ENCODE measurements at regions of chr19 and their contacts with region 1.

Region 1: DNA sequence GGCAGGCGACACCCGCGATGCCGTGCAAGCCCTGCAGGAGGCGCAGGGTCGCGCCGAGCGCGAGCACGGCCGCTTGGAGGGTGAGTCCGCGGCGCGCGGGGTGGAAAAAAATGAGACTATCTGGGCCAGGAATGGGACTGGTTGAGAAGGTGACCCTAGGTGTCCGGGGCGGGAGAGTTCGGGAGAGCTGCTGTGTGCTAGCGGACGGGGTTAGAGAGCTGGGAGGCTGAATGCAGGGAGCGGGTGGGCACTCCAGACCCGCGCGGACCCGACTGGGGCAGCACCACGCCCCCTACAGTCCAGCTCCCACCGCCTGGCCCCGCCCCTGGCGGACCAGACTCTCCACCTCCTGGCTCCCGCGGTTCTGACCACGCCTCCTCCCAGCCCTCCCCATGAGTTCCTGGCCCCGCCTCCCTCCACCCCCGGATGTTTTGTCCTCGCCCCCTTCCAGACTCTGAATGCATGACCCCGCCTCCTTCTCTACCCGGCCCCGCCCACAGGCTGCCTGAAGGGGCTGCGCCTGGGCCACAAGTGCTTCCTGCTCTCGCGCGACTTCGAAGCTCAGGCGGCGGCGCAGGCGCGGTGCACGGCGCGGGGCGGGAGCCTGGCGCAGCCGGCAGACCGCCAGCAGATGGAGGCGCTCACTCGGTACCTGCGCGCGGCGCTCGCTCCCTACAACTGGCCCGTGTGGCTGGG is 1.5 kb downstream of the CLEC11A start:
- DNase-seq: peak; percentile 99 to 100
- ATAC-seq: peak; percentile 66 to 89
- H3K4me3 ChIP-seq: peak overlapping the region; percentile 73
- H3K27ac ChIP-seq: peak overlapping the region; percentile 86 to 92
- H3K4me1 ChIP-seq: peaks cover 14% of the 10 kb centered on the region
- CTCF ChIP-seq: peak; percentile 95
- EP300 ChIP-seq: no peak
- POLR2A ChIP-seq: peak; percentile 99
- RAD21 ChIP-seq: peak; percentile 47 to 57; a peak in 3 of 5 replicates

Region 2: DNA sequence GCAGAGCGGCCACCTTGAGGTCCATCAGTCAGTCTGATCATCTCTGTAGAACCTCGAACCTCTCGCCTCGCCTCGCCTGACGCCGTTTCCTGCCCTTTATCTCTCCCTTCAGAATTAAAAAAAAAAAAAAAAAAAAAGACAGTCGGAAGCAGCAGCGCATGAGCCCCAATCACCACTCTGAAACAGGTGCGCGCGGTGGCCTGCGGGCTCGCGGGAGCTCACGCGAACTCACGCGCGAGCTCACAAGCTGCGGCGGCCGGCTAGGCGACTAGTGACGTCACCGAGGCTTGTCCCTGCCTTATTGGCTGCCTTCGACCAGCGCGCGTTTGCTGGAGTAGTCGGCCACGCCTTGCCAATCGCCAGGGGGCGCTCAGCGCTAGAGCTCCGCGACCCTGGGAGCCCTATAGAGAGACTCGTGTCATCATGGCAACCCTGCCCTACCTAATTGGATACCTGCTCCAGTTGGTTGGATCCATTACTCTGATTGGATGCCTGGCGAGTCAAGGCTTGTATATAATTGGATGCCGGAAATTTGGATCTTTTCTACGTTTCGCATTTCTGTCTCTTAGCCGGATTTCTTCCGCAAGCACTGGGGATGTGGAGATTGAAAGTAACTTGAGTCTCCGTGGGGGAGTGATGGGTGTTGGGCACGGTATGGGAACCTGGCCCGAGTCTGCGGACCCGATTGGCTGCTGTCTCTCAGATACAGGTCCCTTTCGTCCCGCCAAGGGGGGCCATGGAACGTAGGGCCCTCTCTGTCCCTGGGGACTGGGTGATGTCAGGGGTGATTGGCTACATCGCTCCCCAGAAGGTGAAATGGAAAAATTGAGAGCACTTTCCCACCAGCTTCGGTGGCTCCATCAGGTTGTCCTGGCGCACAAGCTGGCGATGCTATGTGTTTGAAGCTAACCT is 116.5 kb before region 1 on chr19:
- CTCF ChIA-PET with region 1: interaction called, 11 read pairs
- POLR2A ChIA-PET with region 1: interaction called, 10 read pairs
- DNase-seq: peak; percentile 97 to 99
- ATAC-seq: peak; percentile 86 to 90
- H3K4me3 ChIP-seq: peak overlapping the region; percentile 28
- H3K27ac ChIP-seq: peak overlapping the region in 1 of 2 experiments; percentile 37; a peak in 3 of 6 replicates
- H3K4me1 ChIP-seq: peaks cover 5% of the 10 kb centered on the region; the same call in 1 of the 3 replicates
- CTCF ChIP-seq: peak; percentile 82
- EP300 ChIP-seq: no peak
- POLR2A ChIP-seq: no peak
- RAD21 ChIP-seq: peak; percentile 80 to 82

Region 3: GRCh38 chr19:50705422-50706019 is 19.1 kb before region 1 on chr19:
- CTCF ChIA-PET with region 1: interaction called, 119 read pairs
- POLR2A ChIA-PET with region 1: interaction called, 7 read pairs
- DNase-seq: peak; percentile 79 to 95
- ATAC-seq: peak; percentile 84 to 88
- H3K4me3 ChIP-seq: no peak overlapping the region
- H3K27ac ChIP-seq: no peak overlapping the region
- H3K4me1 ChIP-seq: peaks cover 13% of the 10 kb centered on the region; the same call in 1 of the 3 replicates
- CTCF ChIP-seq: peak; percentile 80
- EP300 ChIP-seq: no peak
- POLR2A ChIP-seq: no peak
- RAD21 ChIP-seq: peak; percentile 73 to 76

Region 4: GRCh38 chr19:50741179-50741933 is 16.7 kb after region 1 on chr19:
- CTCF ChIA-PET with region 1: interaction called, 47 read pairs
- POLR2A ChIA-PET with region 1: interaction called, 4 read pairs
- DNase-seq: no peak
- ATAC-seq: peak in 1 of 2 experiments; percentile 30; a peak in 1 of 6 replicates
- H3K4me3 ChIP-seq: no peak overlapping the region
- H3K27ac ChIP-seq: no peak overlapping the region
- H3K4me1 ChIP-seq: no peaks in the 10 kb centered on the region
- CTCF ChIP-seq: no peak
- EP300 ChIP-seq: no peak
- POLR2A ChIP-seq: no peak
- RAD21 ChIP-seq: no peak

Region 5: GRCh38 chr19:50759886-50760285 is 35.2 kb after region 1 on chr19:
- CTCF ChIA-PET with region 1: interaction called, 27 read pairs
- POLR2A ChIA-PET with region 1: interaction called, 5 read pairs
- DNase-seq: peak; percentile 55 to 72
- ATAC-seq: peak in 1 of 2 experiments; percentile 59; a peak in 3 of 6 replicates
- H3K4me3 ChIP-seq: no peak overlapping the region
- H3K27ac ChIP-seq: no peak overlapping the region
- H3K4me1 ChIP-seq: no peaks in the 10 kb centered on the region
- CTCF ChIP-seq: no peak
- EP300 ChIP-seq: no peak
- POLR2A ChIP-seq: no peak
- RAD21 ChIP-seq: no peak

Region 6: DNA sequence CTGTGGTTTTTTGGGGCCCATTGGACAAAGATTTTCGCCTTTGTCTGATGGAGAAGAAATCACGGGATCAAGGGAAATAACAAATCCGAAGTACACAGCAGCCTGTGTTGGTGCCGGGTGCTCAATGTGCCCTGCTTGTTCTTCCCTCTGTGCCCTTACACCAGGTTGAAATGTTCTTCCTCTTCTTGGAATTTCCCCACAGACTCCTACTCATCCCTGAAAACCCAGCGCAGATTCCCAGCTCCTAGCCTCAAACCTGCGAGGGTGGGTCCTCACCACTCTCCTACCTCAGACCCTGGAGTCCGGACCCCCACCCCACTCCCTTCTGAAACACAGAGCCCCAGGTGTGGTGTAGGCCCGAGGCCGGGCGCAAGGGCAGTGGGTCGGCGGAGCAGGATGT is 60.7 kb after region 1 on chr19:
- CTCF ChIA-PET with region 1: interaction called, 272 read pairs
- POLR2A ChIA-PET with region 1: interaction called, 25 read pairs
- DNase-seq: no peak
- ATAC-seq: no peak
- H3K4me3 ChIP-seq: no peak overlapping the region
- H3K27ac ChIP-seq: no peak overlapping the region
- H3K4me1 ChIP-seq: peaks cover 7% of the 10 kb centered on the region; the same call in 2 of the 3 replicates
- CTCF ChIP-seq: no peak
- EP300 ChIP-seq: no peak
- POLR2A ChIP-seq: no peak
- RAD21 ChIP-seq: no peak

Region 7: GRCh38 chr19:50804420-50805272 is 80.0 kb after region 1 on chr19:
- CTCF ChIA-PET with region 1: interaction called, 9 read pairs
- POLR2A ChIA-PET with region 1: interaction called, 14 read pairs
- DNase-seq: peak; percentile 98 to 100
- ATAC-seq: peak; percentile 89 to 95
- H3K4me3 ChIP-seq: peak overlapping the region; percentile 65
- H3K27ac ChIP-seq: peak overlapping the region; percentile 94 to 95
- H3K4me1 ChIP-seq: peaks cover 15% of the 10 kb centered on the region
- CTCF ChIP-seq: no peak
- EP300 ChIP-seq: no peak
- POLR2A ChIP-seq: peak; percentile 97
- RAD21 ChIP-seq: no peak

Region 8: DNA sequence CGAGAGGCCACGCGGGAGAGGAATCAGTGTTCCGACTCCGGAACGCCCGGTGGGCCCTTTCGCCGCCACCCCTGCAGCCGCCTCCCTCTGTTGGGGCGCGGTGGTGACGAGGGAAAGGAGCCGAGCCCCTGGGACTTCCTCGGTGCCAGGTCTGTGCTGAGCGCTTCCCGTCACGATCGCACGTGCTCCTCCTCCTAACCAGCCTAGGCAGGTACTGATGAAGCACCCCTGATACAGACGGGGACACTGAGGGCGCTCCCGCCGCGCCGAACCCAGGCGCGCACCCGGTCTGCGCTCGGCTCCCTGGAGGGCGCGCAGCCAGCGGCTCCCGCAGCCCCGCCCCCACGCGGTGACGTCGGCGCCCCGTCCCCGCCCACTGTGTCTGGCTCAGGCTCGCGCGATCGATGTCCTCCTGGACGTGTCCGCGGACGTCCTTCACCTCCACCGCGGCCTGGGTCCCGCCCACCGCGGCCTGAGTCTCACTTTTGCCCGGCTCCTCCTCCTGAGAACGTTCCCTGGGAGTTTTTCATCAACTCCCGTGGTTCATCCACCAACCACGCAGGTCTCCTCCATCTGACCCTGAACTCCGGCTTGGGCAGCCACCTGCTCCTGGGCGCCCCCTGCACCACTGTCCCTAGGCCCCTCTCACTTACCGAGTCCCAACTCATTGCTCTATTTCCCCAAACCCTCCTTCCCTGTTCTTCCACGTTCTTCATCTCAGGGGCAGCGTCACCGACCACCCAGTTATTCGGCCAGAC is 111.3 kb after region 1 on chr19:
- CTCF ChIA-PET with region 1: no interaction called
- POLR2A ChIA-PET with region 1: no interaction called
- DNase-seq: peak; percentile 83 to 95
- ATAC-seq: peak; percentile 83 to 96
- H3K4me3 ChIP-seq: peak overlapping the region; percentile 56
- H3K27ac ChIP-seq: peak overlapping the region; percentile 64 to 83
- H3K4me1 ChIP-seq: peaks cover 9% of the 10 kb centered on the region; the same call in 1 of the 3 replicates
- CTCF ChIP-seq: no peak; the same call in 2 of the 3 replicates
- EP300 ChIP-seq: no peak
- POLR2A ChIP-seq: peak; percentile 97
- RAD21 ChIP-seq: no peak